ENCODE measurements at regions of chr2 and their contacts with region 1.

Region 1: DNA sequence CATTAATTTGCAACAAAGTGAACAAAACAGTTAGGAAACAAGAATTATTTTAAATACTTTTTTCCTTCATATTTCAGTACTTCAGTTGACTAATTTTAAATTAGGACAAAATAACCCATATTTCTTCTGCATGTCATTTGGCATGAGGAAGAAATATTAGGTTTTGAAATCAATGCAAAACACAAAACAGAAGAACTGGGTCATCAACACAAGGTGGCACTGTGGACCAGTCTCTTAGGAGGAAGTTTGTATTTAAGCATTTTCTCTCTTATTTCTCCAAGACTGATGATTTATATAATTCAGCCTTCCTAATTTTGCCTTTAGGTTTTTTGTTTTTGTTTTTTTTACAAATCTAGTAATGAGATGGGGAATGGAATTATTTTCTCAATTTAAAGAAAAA is 352.8 kb upstream of the KCNH7 start:
- DNase-seq: no peak
- ATAC-seq: no peak
- H3K4me3 ChIP-seq: no peak overlapping the region
- H3K27ac ChIP-seq: no peak overlapping the region
- H3K4me1 ChIP-seq: no peaks in the 10 kb centered on the region
- H3K27me3 ChIP-seq: no peaks in the 10 kb centered on the region

Region 2: GRCh38 chr2:164430166-164430783 is 1238.9 kb after region 1 on chr2:
- intact Hi-C with region 1: loop called (anchors 5 kb)
- DNase-seq: no peak
- ATAC-seq: no peak
- H3K4me3 ChIP-seq: no peak overlapping the region
- H3K27ac ChIP-seq: no peak overlapping the region
- H3K4me1 ChIP-seq: no peaks in the 10 kb centered on the region
- H3K27me3 ChIP-seq: no peaks in the 10 kb centered on the region

Region 3: DNA sequence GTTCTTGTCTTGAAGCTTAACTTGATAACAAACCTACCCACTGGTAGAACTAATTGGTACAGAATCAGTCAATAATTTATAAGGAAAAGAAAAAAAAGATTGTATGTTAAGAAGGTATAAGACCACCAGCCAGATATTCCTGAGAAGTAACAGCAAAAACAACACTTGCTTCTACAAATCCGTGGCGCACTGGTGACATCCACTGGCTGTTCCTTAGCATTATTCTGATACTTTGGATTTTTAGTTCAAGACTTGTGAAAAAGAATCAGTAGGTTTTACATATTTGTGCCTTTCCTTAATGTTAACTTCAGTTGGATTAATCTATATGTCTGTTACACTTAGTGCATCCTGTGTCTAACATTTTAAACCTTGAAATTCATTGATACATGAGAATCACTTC is 1288.1 kb after region 1 on chr2:
- intact Hi-C with region 1: loop called (anchors 5 kb)
- DNase-seq: no peak
- ATAC-seq: no peak
- H3K4me3 ChIP-seq: no peak overlapping the region
- H3K27ac ChIP-seq: no peak overlapping the region
- H3K4me1 ChIP-seq: no peaks in the 10 kb centered on the region
- H3K27me3 ChIP-seq: no peaks in the 10 kb centered on the region